Gastrocnemius medialis (tissue), 4 donors: ENCODE measurements at regions of chr17 and their contacts with region 1.

Region 1: GRCh38 chr17:74748529-74749365 is at the start of gene NHERF1:
- DNase-seq: peak; percentile 89 to 92
- ATAC-seq: peak; percentile 9 to 85
- H3K4me3 ChIP-seq: peak within 1 kb of the TSS; percentile 74 to 99 (median 80)
- H3K27ac ChIP-seq: peak within 1 kb of the TSS; percentile 74 to 83 (median 77)
- H3K4me1 ChIP-seq: peaks cover 11 to 14% of the 10 kb centered on the region in 2 donors
- H3K27me3 ChIP-seq: peaks cover 0 to 4% (median 0%) of the 10 kb centered on the region in 3 donors
- CTCF ChIP-seq: peak in 1 of 5 experiments; percentile 5
- POLR2A ChIP-seq: peak; percentile 95 to 98
- total RNA-seq, gene NHERF1: 3.8 to 5.6 (median 5.5) TPM

Region 2: DNA sequence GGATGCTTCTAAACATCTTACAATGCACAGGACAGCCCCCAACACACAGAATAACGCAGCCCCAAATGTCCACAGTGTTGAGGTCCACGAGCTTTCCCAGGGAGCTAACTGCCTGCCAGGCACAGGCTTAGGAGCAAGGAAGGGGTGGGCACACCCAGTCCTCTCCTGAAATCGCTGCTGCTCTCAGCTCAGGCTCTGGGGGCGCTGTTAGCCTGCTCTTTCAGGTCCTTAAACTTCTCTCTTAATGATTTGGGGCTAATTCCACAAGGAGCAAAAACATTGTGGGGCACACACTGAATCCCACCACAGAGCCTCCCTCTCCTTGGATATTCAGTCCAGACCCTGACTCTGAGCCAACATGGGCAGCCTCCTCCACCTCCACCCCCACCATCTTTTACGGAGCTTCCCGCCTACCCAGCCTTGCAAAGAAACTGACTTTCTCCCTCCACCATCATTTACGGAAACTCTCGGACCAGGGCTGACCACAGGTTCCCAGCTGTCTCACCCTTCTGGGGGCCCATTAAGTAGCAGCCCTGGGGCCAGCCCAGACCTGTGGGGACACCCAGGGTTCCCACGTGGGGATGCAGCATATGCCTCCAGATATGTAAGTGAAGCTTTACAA is 182.5 kb before region 1 on chr17:
- in situ Hi-C with region 1: no loop called
- intact Hi-C with region 1: loop called (anchors 10 kb)
- DNase-seq: no peak
- ATAC-seq: no peak
- H3K4me3 ChIP-seq: no peak overlapping the region
- H3K27ac ChIP-seq: no peak overlapping the region
- H3K4me1 ChIP-seq: no peaks in the 10 kb centered on the region
- H3K27me3 ChIP-seq: peaks cover 0 to 12% (median 0%) of the 10 kb centered on the region in 3 donors
- CTCF ChIP-seq: peak in 3 of 5 experiments; percentile 10 to 38 (median 14)
- POLR2A ChIP-seq: no peak

Region 3: GRCh38 chr17:74623693-74624093 is 125.1 kb before region 1 on chr17 and contains the start of gene CD300E:
- in situ Hi-C with region 1: no loop called
- intact Hi-C with region 1: no loop called
- DNase-seq: no peak
- ATAC-seq: peak in 1 of 2 donors; percentile 21
- H3K4me3 ChIP-seq: no peak within 1 kb of the TSS
- H3K27ac ChIP-seq: no peak within 1 kb of the TSS
- H3K4me1 ChIP-seq: no peaks in the 10 kb centered on the region
- H3K27me3 ChIP-seq: peaks cover 0 to 7% (median 6%) of the 10 kb centered on the region in 3 donors
- CTCF ChIP-seq: no peak
- POLR2A ChIP-seq: no peak
- total RNA-seq, gene CD300E: 0.26 to 0.91 TPM in 2 of 4 donors, not detected in the others

Region 4: DNA sequence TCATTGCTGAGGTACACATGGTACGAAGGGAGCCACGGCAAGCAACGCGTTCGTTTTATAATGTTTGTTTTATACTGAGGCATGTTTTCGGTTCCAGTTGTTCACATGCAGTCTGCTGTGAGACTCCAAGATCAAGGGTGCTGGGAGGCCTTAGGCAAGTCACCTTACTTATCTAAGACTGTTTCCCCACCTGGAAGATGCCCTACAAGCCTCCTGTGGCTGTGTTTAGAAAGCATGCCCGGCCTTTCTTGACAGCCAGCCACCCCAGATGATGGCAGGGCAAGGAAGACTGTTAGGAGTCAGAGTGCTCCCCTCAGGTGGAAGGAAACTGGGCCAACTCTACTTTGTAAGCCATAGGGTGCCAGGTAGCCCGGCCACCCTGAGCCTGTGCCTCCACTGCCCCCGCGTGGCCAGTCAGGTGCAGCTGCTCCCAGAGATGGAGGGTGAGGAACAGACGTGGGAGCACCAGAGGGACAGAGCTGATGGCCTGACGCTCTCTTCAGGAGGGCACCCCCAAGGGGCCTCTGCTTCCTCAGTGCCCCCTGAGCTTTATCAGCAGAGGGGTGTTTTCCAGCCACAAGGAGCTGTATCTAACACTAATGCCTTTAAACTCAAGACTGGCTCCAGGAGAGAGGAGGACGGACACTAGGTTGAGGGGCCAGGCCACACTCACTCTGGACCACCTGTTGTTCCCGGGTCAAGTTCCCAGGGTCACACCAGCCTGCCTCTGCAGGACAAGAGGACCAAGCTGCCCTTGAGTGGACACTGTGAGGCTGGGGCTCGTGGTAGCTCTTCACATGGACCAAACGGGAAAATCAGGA is 22.0 kb after region 1 on chr17:
- in situ Hi-C with region 1: no loop called
- intact Hi-C with region 1: loop called (anchors 1 kb)
- DNase-seq: peak; percentile 25 to 63
- ATAC-seq: peak; percentile 25 to 57
- H3K4me3 ChIP-seq: no peak overlapping the region
- H3K27ac ChIP-seq: no peak overlapping the region
- H3K4me1 ChIP-seq: peaks cover 20 to 22% of the 10 kb centered on the region in 2 donors
- H3K27me3 ChIP-seq: no peaks in the 10 kb centered on the region
- CTCF ChIP-seq: peak; percentile 48 to 77 (median 74)
- POLR2A ChIP-seq: no peak

Region 5: GRCh38 chr17:74776044-74776977 is 27.6 kb after region 1 on chr17 and contains the start of gene NAT9:
- in situ Hi-C with region 1: no loop called
- intact Hi-C with region 1: loop called (anchors 1 kb)
- DNase-seq: peak; percentile 93 to 96
- ATAC-seq: peak; percentile 95 to 96
- H3K4me3 ChIP-seq: peak within 1 kb of the TSS; percentile 75 to 99 (median 93)
- H3K27ac ChIP-seq: peak within 1 kb of the TSS; percentile 84 to 91 (median 87)
- H3K4me1 ChIP-seq: peaks cover 17 to 23% of the 10 kb centered on the region in 2 donors
- H3K27me3 ChIP-seq: no peaks in the 10 kb centered on the region
- CTCF ChIP-seq: no peak
- POLR2A ChIP-seq: peak; percentile 65 to 77
- total RNA-seq, gene NAT9: 7.7 to 27.4 (median 14.5) TPM

Region 6: DNA sequence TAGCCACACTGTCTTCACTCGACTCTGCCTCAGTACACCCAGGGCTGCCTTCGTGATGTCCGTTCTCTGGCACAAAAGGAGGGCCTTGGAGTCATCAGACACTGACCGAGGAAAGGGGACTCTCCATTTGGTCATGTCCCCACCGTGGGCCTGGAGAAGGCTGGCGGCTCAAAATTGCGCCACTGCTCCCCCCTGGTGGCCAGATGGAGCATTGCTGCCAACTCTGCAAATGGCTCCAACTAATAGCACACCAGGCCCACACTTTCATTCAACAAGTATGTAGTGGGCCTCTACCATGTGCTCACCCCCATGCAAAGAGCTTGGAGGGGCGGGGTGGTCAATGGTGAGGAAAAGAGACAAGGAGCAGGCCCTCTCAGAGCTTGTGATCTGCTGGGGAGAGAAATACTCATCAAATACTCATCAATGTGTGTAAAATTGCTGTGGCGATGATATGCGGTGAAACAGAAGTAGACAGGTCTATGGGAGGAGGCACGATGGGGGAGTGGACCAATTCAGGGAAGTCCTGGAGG is 116.2 kb after region 1 on chr17:
- in situ Hi-C with region 1: loop called (anchors 5 to 10 kb)
- intact Hi-C with region 1: loop called (anchors 1 kb)
- DNase-seq: peak; percentile 37 to 67
- ATAC-seq: peak; percentile 69 to 71
- H3K4me3 ChIP-seq: no peak overlapping the region
- H3K27ac ChIP-seq: no peak overlapping the region
- H3K4me1 ChIP-seq: peaks cover 0 to 20% of the 10 kb centered on the region in 2 donors
- H3K27me3 ChIP-seq: peaks cover 13 to 20% (median 20%) of the 10 kb centered on the region in 3 donors
- CTCF ChIP-seq: peak; percentile 90 to 96 (median 93)
- POLR2A ChIP-seq: no peak

Region 7: GRCh38 chr17:74873038-74873873 is 124.5 kb after region 1 on chr17:
- in situ Hi-C with region 1: loop called (anchors 5 to 10 kb)
- intact Hi-C with region 1: loop called (anchors 1 kb)
- DNase-seq: peak; percentile 99 to 100
- ATAC-seq: peak; percentile 97 to 99
- H3K4me3 ChIP-seq: peak overlapping the region; percentile 71 to 83 (median 76)
- H3K27ac ChIP-seq: peak overlapping the region; percentile 86 to 95 (median 93)
- H3K4me1 ChIP-seq: peaks cover 14% of the 10 kb centered on the region in 2 donors
- H3K27me3 ChIP-seq: no peaks in the 10 kb centered on the region
- CTCF ChIP-seq: peak in 1 of 5 experiments; percentile 31
- POLR2A ChIP-seq: peak; percentile 77 to 97